HepG2 (cell line): ENCODE measurements at regions of chr5 and their contacts with region 1.

Region 1: GRCh38 chr5:179368806-179369529 is 23.7 kb upstream of the ADAMTS2 start:
- DNase-seq: no peak
- ATAC-seq: no peak
- H3K4me3 ChIP-seq: no peak overlapping the region
- H3K27ac ChIP-seq: no peak overlapping the region
- H3K4me1 ChIP-seq: no peaks in the 10 kb centered on the region
- H3K27me3 ChIP-seq: peaks cover 7 to 68% of the 10 kb centered on the region in 2 experiments; a peak in 4 of 5 replicates
- CTCF ChIP-seq: no peak
- EP300 ChIP-seq: no peak
- POLR2A ChIP-seq: no peak
- RAD21 ChIP-seq: no peak

Region 2: DNA sequence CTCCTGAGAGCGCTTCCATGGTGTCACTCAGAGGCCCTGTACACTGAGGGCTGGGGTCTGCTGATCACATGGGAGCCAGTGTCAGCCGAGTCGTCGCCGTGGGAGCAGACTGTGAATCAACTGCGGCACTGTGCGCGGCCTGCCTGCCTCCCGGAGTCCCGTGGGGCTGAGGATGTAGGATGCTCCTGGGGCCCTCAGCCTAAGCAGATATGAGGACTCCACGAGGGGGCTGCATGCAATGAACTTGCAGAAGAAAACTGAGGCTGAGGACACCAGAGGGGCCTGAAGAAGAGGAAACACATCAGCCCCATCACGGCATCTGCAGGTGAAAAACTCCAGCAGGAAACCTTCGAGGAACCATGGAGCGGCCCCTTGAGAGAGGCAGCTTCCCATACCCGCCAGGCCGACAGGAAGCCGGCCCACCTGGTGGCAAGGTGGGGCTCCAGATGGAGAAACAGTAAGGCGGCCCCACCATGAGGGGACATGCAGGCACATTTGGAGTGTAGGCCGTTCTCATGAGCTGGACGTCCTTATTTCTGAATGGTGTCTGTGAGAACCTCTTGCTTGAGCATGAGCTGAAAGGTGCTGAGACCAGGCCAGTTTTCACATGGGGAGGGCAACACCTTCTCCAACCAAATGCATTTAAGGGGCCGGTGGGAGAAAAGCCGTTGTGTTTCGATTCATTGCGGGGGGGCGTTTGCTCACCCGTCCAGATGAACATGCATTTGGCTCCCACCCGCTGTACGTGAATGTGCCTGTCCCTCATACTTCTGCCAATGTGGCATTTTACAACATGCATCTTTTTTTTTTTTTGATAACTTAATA is 11.5 kb after region 1 on chr5:
- CTCF ChIA-PET with region 1: no interaction called
- POLR2A ChIA-PET with region 1: no interaction called
- in situ Hi-C with region 1: no loop called
- intact Hi-C with region 1: loop called (anchors 1 kb)
- DNase-seq: no peak
- ATAC-seq: no peak
- H3K4me3 ChIP-seq: no peak overlapping the region
- H3K27ac ChIP-seq: no peak overlapping the region
- H3K4me1 ChIP-seq: no peaks in the 10 kb centered on the region
- H3K27me3 ChIP-seq: peaks cover 3 to 32% of the 10 kb centered on the region in 2 experiments; a peak in 4 of 5 replicates
- CTCF ChIP-seq: no peak
- EP300 ChIP-seq: no peak
- POLR2A ChIP-seq: no peak
- RAD21 ChIP-seq: no peak